Activated T-helper 1 cell treated with anti-CD3 and anti-CD28 coated beads, Interleukin-12 subunit alpha, Interleukin-12 subunit beta, Interleukin-2, Interleukin-4 antibody, amounts not matched to agents 30 ng/mL and 10 ng/mL and 1 ng/mL, durations not matched to agents 14 hours and 24 hours and 36 hours (primary cell): ENCODE measurements at regions of chr6 and their contacts with region 1.

Region 1: GRCh38 chr6:143677891-143678791 is at the start of gene PHACTR2:
- DNase-seq: peak; percentile 4
- H3K4me3 Mint-ChIP-seq: peak within 1 kb of the TSS; percentile 84
- H3K27ac Mint-ChIP-seq: peak within 1 kb of the TSS; percentile 18
- H3K4me1 Mint-ChIP-seq: peaks cover 33% of the 10 kb centered on the region
- H3K27me3 Mint-ChIP-seq: peaks cover 14% of the 10 kb centered on the region
- total RNA-seq, gene PHACTR2: 63.5 and 64.5 TPM in 2 replicates

Region 2: GRCh38 chr6:143575440-143575839 is 102.7 kb before region 1 on chr6:
- intact Hi-C with region 1: loop called (anchors 5 kb)
- DNase-seq: peak; percentile 48
- H3K4me3 Mint-ChIP-seq: no peak overlapping the region
- H3K27ac Mint-ChIP-seq: no peak overlapping the region
- H3K4me1 Mint-ChIP-seq: peaks cover 12% of the 10 kb centered on the region
- H3K27me3 Mint-ChIP-seq: no peaks in the 10 kb centered on the region